Activated B cell treated with CpG ODN at 0.5 μM for 24 hours (primary cell): ENCODE measurements at regions of chr6 and their contacts with region 1.

Region 1: DNA sequence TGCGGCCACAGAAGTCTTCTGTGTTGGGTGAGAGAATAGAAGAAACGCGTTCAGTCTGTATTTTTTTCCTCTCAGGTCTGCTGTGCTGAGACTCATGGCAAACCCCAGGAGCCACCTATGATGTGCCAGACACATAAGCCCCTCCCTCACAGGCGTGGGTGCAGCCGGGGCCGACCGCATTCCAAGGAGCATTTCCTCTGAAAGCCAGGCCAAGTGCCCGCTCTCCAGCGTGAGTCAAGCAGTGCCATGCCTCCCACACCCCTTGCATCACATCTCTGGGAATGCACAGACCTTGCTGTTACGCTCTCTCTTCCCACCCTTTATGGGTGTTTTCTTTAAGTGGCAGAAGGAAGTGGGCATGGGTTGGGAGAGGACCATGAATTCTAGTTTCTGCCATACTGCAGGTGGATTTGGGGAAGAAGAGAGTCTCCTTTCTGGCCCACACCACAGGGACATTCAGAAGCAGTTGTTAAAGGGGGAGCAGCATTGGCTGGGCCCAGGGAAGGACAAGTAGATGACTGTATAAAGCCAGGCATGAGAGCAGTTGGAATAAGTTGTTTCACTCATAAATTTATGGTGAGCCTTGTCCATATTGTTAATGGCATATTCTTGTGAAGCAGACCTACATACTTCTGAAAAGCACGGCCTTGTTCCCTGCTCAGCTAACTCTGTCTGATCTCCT is 37.1 kb upstream of the TFAP2A start:
- DNase-seq: no peak
- ATAC-seq: no peak
- H3K4me3 Mint-ChIP-seq: no peak overlapping the region
- H3K27ac Mint-ChIP-seq: no peak overlapping the region
- H3K4me1 Mint-ChIP-seq: no peaks in the 10 kb centered on the region
- H3K27me3 Mint-ChIP-seq: peaks cover 19% of the 10 kb centered on the region
- CTCF ChIP-seq: no peak

Region 2: DNA sequence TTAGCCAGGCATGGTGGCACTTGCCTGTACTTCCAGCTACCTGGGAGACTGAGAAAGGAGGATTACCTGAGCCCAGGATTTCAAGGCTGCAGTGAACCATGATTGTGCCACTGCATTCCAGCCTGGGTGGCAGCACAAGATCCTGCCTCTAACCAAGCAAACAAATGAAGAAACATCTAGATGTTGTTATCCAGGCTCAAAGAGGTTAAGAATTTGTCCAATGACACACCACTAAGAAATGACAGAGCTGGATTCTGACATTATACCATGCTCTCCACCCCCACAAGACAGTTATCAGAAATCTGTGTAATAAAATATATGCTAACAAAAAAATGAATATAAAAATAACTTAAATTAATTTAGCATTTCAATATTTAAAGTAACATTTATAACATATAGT is 1091.1 kb before region 1 on chr6:
- CTCF ChIA-PET with region 1: no interaction called
- POLR2A ChIA-PET with region 1: no interaction called
- intact Hi-C with region 1: no loop called
- DNase-seq: no peak
- ATAC-seq: no peak
- H3K4me3 Mint-ChIP-seq: no peak overlapping the region
- H3K27ac Mint-ChIP-seq: no peak overlapping the region
- H3K4me1 Mint-ChIP-seq: no peaks in the 10 kb centered on the region
- H3K27me3 Mint-ChIP-seq: no peaks in the 10 kb centered on the region
- CTCF ChIP-seq: no peak

Region 3: GRCh38 chr6:9806195-9806594 is 645.8 kb before region 1 on chr6:
- CTCF ChIA-PET with region 1: no interaction called
- POLR2A ChIA-PET with region 1: no interaction called
- intact Hi-C with region 1: loop called (anchors 5 kb)
- DNase-seq: no peak
- ATAC-seq: no peak
- H3K4me3 Mint-ChIP-seq: no peak overlapping the region
- H3K27ac Mint-ChIP-seq: no peak overlapping the region
- H3K4me1 Mint-ChIP-seq: no peaks in the 10 kb centered on the region
- H3K27me3 Mint-ChIP-seq: no peaks in the 10 kb centered on the region
- CTCF ChIP-seq: no peak

Region 4: GRCh38 chr6:10163200-10163962 is 288.6 kb before region 1 on chr6:
- CTCF ChIA-PET with region 1: no interaction called
- POLR2A ChIA-PET with region 1: no interaction called
- intact Hi-C with region 1: no loop called
- DNase-seq: no peak
- ATAC-seq: no peak
- H3K4me3 Mint-ChIP-seq: no peak overlapping the region
- H3K27ac Mint-ChIP-seq: no peak overlapping the region
- H3K4me1 Mint-ChIP-seq: no peaks in the 10 kb centered on the region
- H3K27me3 Mint-ChIP-seq: no peaks in the 10 kb centered on the region
- CTCF ChIP-seq: no peak

Region 5: GRCh38 chr6:10434692-10435376 is 17.1 kb before region 1 on chr6:
- CTCF ChIA-PET with region 1: no interaction called
- POLR2A ChIA-PET with region 1: no interaction called
- intact Hi-C with region 1: no loop called
- DNase-seq: no peak
- ATAC-seq: no peak
- H3K4me3 Mint-ChIP-seq: no peak overlapping the region
- H3K27ac Mint-ChIP-seq: no peak overlapping the region
- H3K4me1 Mint-ChIP-seq: peaks cover 6% of the 10 kb centered on the region
- H3K27me3 Mint-ChIP-seq: peaks cover 18% of the 10 kb centered on the region
- CTCF ChIP-seq: peak; percentile 31